Activated CD4-positive, alpha-beta memory T cell treated with anti-CD3 and anti-CD28 coated beads for 36 hours (primary cell): ENCODE measurements at regions of chr10 and their contacts with region 1.

Region 1: GRCh38 chr10:119090968-119091367 is 10.4 kb upstream of the EIF3A start:
- DNase-seq: peak; percentile 55
- H3K4me3 Mint-ChIP-seq: peak overlapping the region; percentile 25
- H3K27ac Mint-ChIP-seq: peak overlapping the region; percentile 74
- H3K4me1 Mint-ChIP-seq: peaks cover 47% of the 10 kb centered on the region
- H3K27me3 Mint-ChIP-seq: no peaks in the 10 kb centered on the region

Region 2: GRCh38 chr10:119041326-119041725 is 49.6 kb before region 1 on chr10:
- CTCF ChIA-PET with region 1: no interaction called
- POLR2A ChIA-PET with region 1: no interaction called
- intact Hi-C with region 1: no loop called
- DNase-seq: no peak
- H3K4me3 Mint-ChIP-seq: no peak overlapping the region
- H3K27ac Mint-ChIP-seq: no peak overlapping the region
- H3K4me1 Mint-ChIP-seq: peaks cover 17% of the 10 kb centered on the region
- H3K27me3 Mint-ChIP-seq: no peaks in the 10 kb centered on the region

Region 3: DNA sequence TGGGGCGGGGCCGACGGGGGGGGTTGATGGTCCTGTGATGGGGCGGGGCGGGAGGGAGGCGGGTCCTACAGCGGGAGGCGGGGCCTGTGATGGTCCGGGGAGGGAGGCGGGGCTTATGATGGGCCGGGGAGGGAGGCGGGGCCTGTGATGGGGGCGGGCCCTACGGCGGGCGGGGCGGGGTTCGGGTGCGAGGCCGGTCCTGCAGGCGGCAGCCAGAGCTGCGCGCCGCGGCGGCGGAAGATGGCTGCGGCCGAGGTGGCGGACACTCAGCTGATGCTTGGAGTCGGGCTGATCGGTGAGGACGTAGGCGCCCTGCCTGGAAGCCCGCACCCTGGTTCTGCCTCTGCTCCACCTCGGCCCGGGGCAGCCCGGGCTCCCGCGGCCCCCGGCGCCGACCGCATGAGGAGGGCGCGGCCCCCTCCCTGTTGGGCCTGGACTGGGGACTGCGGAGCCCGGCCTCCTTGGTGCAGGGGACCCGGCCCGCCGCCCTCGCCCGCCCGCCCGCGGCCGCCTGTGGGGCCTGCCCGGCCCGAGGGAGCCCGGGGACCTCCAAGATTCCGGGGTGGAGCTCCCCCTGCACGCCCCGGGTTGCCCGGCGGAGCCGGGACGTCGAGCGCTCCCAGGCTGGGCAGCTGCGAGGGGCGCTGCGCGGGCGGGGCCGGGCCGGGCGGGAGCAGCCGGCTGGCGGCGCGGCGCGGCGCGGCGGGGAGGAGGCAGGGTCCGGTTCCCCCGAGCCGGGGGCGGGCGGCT is 13.1 kb after region 1 on chr10 and contains the start of gene DENND10:
- CTCF ChIA-PET with region 1: no interaction called
- POLR2A ChIA-PET with region 1: no interaction called
- intact Hi-C with region 1: loop called (anchors 1 kb)
- DNase-seq: peak; percentile 87
- H3K4me3 Mint-ChIP-seq: peak within 1 kb of the TSS; percentile 75
- H3K27ac Mint-ChIP-seq: peak within 1 kb of the TSS; percentile 38
- H3K4me1 Mint-ChIP-seq: peaks cover 20% of the 10 kb centered on the region
- H3K27me3 Mint-ChIP-seq: no peaks in the 10 kb centered on the region
- total RNA-seq, gene DENND10: 29.8 to 31.4 TPM